Activated CD4-positive, alpha-beta memory T cell treated with anti-CD3 and anti-CD28 coated beads for 36 hours (primary cell): ENCODE measurements at regions of chr5 and their contacts with region 1.

Region 1: GRCh38 chr5:171858303-171858702 is 72.7 kb downstream of the SMIM23 start:
- DNase-seq: no peak
- H3K4me3 Mint-ChIP-seq: no peak overlapping the region
- H3K27ac Mint-ChIP-seq: no peak overlapping the region
- H3K4me1 Mint-ChIP-seq: no peaks in the 10 kb centered on the region
- H3K27me3 Mint-ChIP-seq: no peaks in the 10 kb centered on the region

Region 2: GRCh38 chr5:171871711-171872110 is 13.4 kb after region 1 on chr5:
- CTCF ChIA-PET with region 1: interaction called, 20 read pairs
- POLR2A ChIA-PET with region 1: no interaction called
- intact Hi-C with region 1: no loop called
- DNase-seq: no peak
- H3K4me3 Mint-ChIP-seq: no peak overlapping the region
- H3K27ac Mint-ChIP-seq: no peak overlapping the region
- H3K4me1 Mint-ChIP-seq: no peaks in the 10 kb centered on the region
- H3K27me3 Mint-ChIP-seq: no peaks in the 10 kb centered on the region